ENCODE measurements at regions of chr11 and their contacts with region 1.

Region 1: GRCh38 chr11:102109896-102110760 is at the start of gene YAP1:
- DNase-seq: peak; percentile 97 to 99
- H3K4me3 ChIP-seq: peak within 1 kb of the TSS; percentile 96
- H3K4me3 Mint-ChIP-seq: peak within 1 kb of the TSS; percentile 91
- H3K27ac Mint-ChIP-seq: peak within 1 kb of the TSS; percentile 98
- H3K4me1 ChIP-seq: peaks cover 20% of the 10 kb centered on the region
- H3K4me1 Mint-ChIP-seq: peaks cover 16% of the 10 kb centered on the region
- H3K27me3 ChIP-seq: no peaks in the 10 kb centered on the region
- H3K27me3 Mint-ChIP-seq: no peaks in the 10 kb centered on the region
- CTCF ChIP-seq: no peak
- total RNA-seq, gene YAP1: 207 and 227 TPM in 2 replicates

Region 2: GRCh38 chr11:102026212-102026611 is 83.9 kb before region 1 on chr11:
- CTCF ChIA-PET with region 1: no interaction called
- POLR2A ChIA-PET with region 1: no interaction called
- intact Hi-C with region 1: no loop called
- DNase-seq: peak; percentile 47 to 65
- H3K4me3 ChIP-seq: no peak overlapping the region
- H3K4me3 Mint-ChIP-seq: no peak overlapping the region
- H3K27ac Mint-ChIP-seq: no peak overlapping the region
- H3K4me1 ChIP-seq: peaks cover 19% of the 10 kb centered on the region
- H3K4me1 Mint-ChIP-seq: peaks cover 23% of the 10 kb centered on the region
- H3K27me3 ChIP-seq: no peaks in the 10 kb centered on the region
- H3K27me3 Mint-ChIP-seq: no peaks in the 10 kb centered on the region
- CTCF ChIP-seq: no peak

Region 3: DNA sequence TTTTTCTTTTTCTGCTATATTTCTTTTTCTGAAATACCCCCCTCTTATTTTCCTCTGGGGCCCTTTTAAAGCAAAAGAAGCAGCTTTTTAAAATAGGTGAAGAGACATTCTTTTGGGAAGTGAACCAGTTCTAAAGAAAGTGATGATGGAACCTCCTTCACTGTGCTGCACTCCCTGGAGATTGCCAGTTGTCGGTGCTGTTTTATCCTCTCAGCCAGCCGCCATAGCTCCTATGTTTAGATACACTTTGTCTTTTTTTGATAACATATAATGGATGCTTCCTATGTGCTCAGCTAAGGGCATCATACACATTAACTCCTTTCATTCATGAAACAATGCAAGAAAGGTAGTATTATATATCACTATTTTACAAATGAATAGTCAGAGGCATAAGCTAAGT is 48.9 kb before region 1 on chr11:
- CTCF ChIA-PET with region 1: interaction called, 5 read pairs
- POLR2A ChIA-PET with region 1: no interaction called
- intact Hi-C with region 1: loop called (anchors 2 kb)
- DNase-seq: peak in 1 of 2 experiments; percentile 26
- H3K4me3 ChIP-seq: no peak overlapping the region
- H3K4me3 Mint-ChIP-seq: no peak overlapping the region
- H3K27ac Mint-ChIP-seq: no peak overlapping the region
- H3K4me1 ChIP-seq: no peaks in the 10 kb centered on the region
- H3K4me1 Mint-ChIP-seq: peaks cover 6% of the 10 kb centered on the region
- H3K27me3 ChIP-seq: no peaks in the 10 kb centered on the region
- H3K27me3 Mint-ChIP-seq: no peaks in the 10 kb centered on the region
- CTCF ChIP-seq: peak; percentile 43

Region 4: GRCh38 chr11:102157219-102157618 is 47.1 kb after region 1 on chr11:
- CTCF ChIA-PET with region 1: interaction called, 9 read pairs
- POLR2A ChIA-PET with region 1: no interaction called
- intact Hi-C with region 1: loop called (anchors 2 kb)
- DNase-seq: peak in 1 of 2 experiments; percentile 32
- H3K4me3 ChIP-seq: no peak overlapping the region
- H3K4me3 Mint-ChIP-seq: no peak overlapping the region
- H3K27ac Mint-ChIP-seq: peak overlapping the region; percentile 13
- H3K4me1 ChIP-seq: peaks cover 42% of the 10 kb centered on the region
- H3K4me1 Mint-ChIP-seq: peaks cover 52% of the 10 kb centered on the region
- H3K27me3 ChIP-seq: no peaks in the 10 kb centered on the region
- H3K27me3 Mint-ChIP-seq: no peaks in the 10 kb centered on the region
- CTCF ChIP-seq: no peak

Region 5: DNA sequence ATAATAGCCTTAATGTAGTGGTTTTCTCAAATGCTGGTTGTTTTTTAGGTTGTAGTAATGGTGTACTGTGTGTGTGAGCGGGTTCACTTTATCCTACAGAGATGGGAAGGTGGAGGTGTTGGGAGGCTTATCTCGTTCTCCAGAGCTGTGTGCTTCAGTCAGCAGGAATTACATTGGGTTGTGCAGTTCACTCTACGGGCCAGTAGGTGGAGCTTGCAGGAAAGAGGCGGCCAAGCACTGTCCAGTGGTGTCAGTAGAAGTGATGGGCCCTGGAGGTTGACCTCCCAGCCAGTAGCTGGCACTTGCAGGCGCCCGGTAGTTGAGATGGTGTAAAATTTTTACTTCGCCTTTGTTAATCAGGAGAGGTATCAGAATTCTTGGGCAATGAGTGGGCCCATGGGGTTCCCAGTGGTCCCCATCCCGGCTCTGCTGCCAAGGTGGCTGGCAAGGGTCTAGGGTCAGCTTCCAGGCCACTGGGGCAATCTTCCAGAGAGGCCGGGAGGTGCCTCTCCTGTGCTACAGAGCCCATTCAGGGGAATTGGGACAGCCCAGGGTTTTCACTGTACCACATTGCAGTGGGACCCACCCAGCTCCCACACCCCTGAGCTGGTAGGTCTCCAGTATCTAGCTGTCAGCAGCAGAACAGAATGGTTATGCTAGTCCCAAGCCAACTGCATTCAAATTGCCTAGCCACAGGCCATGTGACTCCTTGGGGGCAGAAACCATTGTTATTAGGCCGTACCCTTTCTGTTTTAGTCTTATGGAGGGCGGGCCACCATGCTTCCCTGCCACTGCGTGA is 280.7 kb after region 1 on chr11:
- CTCF ChIA-PET with region 1: no interaction called
- POLR2A ChIA-PET with region 1: no interaction called
- intact Hi-C with region 1: no loop called
- DNase-seq: peak; percentile 89
- H3K4me3 ChIP-seq: no peak overlapping the region
- H3K4me3 Mint-ChIP-seq: no peak overlapping the region
- H3K27ac Mint-ChIP-seq: peak overlapping the region; percentile 3
- H3K4me1 ChIP-seq: peaks cover 16% of the 10 kb centered on the region
- H3K4me1 Mint-ChIP-seq: peaks cover 21% of the 10 kb centered on the region
- H3K27me3 ChIP-seq: no peaks in the 10 kb centered on the region
- H3K27me3 Mint-ChIP-seq: no peaks in the 10 kb centered on the region
- CTCF ChIP-seq: peak; percentile 97 to 98